ENCODE measurements at regions of chr11 and their contacts with region 1.

Region 1: GRCh38 chr11:61187505-61188130 is 15.7 kb upstream of the PGA3 start:
- DNase-seq: peak; percentile 60
- ATAC-seq: peak; percentile 70
- H3K4me3 ChIP-seq: no peak overlapping the region
- H3K27ac ChIP-seq: no peak overlapping the region
- H3K4me1 ChIP-seq: no peaks in the 10 kb centered on the region
- H3K27me3 ChIP-seq: peaks cover 0 to 3% of the 10 kb centered on the region in 2 experiments; a peak in 2 of 5 replicates
- CTCF ChIP-seq: peak; percentile 86
- EP300 ChIP-seq: no peak
- POLR2A ChIP-seq: no peak
- RAD21 ChIP-seq: peak; percentile 55

Region 2: DNA sequence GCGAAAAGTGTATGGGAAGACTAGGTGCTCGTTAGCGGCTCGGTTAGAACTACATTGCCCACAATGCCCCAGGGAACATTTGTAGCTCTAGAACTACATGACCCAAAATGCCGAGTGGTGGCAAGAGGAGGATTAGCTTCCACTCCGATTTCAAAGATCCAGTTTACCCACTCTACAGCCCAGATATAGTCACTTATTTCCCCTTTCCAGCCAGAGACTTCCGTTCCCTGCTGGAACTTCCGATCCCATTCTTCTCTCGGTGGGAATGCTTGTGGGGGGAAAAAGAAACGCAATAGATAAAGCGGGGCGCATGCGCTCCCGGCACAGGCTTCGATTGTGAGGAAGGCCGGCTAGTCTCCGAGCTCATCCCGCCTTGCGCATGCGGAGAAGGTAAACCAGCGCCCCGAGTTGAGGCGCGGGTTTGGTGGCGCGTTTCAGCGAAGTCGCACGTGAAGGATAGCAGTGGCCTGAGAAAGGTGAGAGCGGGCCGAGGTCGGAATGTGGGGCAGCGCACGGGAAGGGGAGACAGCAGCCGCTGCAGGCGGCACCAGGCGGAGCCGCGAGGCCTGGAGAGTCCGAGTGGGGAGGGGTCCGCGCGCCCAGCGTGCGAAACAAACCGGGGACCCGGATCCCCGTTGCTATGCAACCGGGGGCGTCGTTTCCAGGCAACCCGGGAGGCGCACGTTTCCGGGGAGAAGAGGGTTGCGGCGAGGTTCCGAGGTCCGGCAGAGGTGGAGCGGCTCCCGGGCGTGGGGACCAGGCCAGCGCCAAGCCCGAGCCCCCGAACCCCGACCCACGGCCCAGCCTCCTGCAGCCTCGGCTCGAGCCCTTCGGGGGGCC is 273.6 kb before region 1 on chr11 and contains the start of gene TMEM109:
- CTCF ChIA-PET with region 1: no interaction called
- POLR2A ChIA-PET with region 1: no interaction called
- in situ Hi-C with region 1: no loop called
- intact Hi-C with region 1: no loop called
- DNase-seq: peak; percentile 68
- ATAC-seq: peak; percentile 92
- H3K4me3 ChIP-seq: peak within 1 kb of the TSS; percentile 24 to 62 (median 53); a peak in 5 of 6 replicates
- H3K27ac ChIP-seq: peak within 1 kb of the TSS; percentile 64
- H3K4me1 ChIP-seq: peaks cover 27% of the 10 kb centered on the region
- H3K27me3 ChIP-seq: no peaks in the 10 kb centered on the region
- CTCF ChIP-seq: no peak
- EP300 ChIP-seq: 0 out of 4 replicates have a peak, but pooled peaks of 1 of the 2 experiments have one; percentile 5
- POLR2A ChIP-seq: no peak; a peak in 1 of 4 replicates
- RAD21 ChIP-seq: no peak
- total RNA-seq, gene TMEM109: 10.7 and 18.0 TPM in 2 replicates

Region 3: DNA sequence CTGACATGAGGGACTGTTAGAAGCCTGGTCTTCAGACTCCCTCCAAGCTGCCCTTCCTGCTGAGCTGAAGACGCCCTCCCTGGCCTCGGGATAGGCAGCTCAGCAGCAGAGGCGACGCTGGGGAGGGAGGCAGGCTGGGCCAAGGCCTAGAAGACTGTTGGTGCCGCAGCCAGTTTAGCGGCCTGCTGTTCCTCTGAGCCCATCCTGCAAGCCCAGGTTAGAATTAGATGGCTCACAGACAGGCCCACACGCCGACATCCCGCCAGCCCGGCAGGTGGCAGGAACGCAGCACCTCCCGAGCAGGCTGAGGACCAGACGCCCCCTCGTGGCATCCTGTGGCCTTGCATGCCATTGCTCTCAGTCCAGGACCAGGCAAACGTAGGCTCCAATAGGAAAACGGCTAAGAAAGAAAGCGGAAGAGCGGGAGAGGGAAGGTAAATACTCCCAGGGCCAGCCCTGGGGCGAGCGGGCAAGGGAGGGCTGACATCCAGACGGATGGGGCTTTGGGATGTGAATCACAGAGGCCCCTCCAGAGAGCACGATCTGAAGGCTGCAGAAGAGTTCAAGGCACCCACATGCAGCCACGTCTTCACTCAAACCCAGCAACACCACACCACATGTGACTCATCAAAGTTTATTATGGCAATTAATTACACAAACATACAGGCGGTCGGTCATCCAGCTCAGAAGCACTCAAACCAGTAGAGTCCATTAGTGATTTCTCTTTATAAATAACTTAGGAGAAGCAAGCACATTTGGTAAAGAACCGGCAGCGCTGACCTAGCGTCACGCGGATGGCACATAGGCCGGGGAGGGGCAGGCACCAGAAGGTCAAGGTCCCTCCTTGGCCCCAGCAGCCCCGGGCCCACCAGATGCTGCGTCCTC is 57.7 kb before region 1 on chr11:
- CTCF ChIA-PET with region 1: interaction called, 35 read pairs
- POLR2A ChIA-PET with region 1: no interaction called
- in situ Hi-C with region 1: no loop called
- intact Hi-C with region 1: loop called (anchors 1 kb)
- DNase-seq: peak; percentile 82
- ATAC-seq: peak; percentile 90
- H3K4me3 ChIP-seq: no peak overlapping the region; a peak in 1 of 6 replicates
- H3K27ac ChIP-seq: no peak overlapping the region
- H3K4me1 ChIP-seq: peaks cover 6% of the 10 kb centered on the region
- H3K27me3 ChIP-seq: peaks cover 1 to 13% of the 10 kb centered on the region in 2 experiments; a peak in 4 of 5 replicates
- CTCF ChIP-seq: peak; percentile 100
- EP300 ChIP-seq: no peak; a peak in 1 of 4 replicates
- POLR2A ChIP-seq: no peak
- RAD21 ChIP-seq: peak; percentile 99

Measured in HepG2 (cell line).